Endothelial cell of umbilical vein (primary cell): ENCODE measurements at regions of chr11 and their contacts with region 1.

Region 1: GRCh38 chr11:118198370-118198769 is 21.9 kb upstream of the SCN2B start:
- DNase-seq: peak; percentile 61
- H3K4me3 ChIP-seq: no peak overlapping the region
- H3K27ac ChIP-seq: no peak overlapping the region
- H3K4me1 ChIP-seq: no peaks in the 10 kb centered on the region
- H3K27me3 ChIP-seq: peaks cover 0 to 4% of the 10 kb centered on the region in 2 experiments
- CTCF ChIP-seq: peak; percentile 81 to 93
- POLR2A ChIP-seq: no peak

Region 2: GRCh38 chr11:118180300-118180703 is 18.1 kb before region 1 on chr11:
- CTCF ChIA-PET with region 1: interaction called, 15 read pairs
- POLR2A ChIA-PET with region 1: no interaction called
- dilution Hi-C with region 1: no loop called
- intact Hi-C with region 1: no loop called
- DNase-seq: no peak
- H3K4me3 ChIP-seq: no peak overlapping the region
- H3K27ac ChIP-seq: no peak overlapping the region
- H3K4me1 ChIP-seq: no peaks in the 10 kb centered on the region
- H3K27me3 ChIP-seq: peaks cover 16 to 18% of the 10 kb centered on the region in 2 experiments
- CTCF ChIP-seq: no peak
- POLR2A ChIP-seq: no peak

Region 3: DNA sequence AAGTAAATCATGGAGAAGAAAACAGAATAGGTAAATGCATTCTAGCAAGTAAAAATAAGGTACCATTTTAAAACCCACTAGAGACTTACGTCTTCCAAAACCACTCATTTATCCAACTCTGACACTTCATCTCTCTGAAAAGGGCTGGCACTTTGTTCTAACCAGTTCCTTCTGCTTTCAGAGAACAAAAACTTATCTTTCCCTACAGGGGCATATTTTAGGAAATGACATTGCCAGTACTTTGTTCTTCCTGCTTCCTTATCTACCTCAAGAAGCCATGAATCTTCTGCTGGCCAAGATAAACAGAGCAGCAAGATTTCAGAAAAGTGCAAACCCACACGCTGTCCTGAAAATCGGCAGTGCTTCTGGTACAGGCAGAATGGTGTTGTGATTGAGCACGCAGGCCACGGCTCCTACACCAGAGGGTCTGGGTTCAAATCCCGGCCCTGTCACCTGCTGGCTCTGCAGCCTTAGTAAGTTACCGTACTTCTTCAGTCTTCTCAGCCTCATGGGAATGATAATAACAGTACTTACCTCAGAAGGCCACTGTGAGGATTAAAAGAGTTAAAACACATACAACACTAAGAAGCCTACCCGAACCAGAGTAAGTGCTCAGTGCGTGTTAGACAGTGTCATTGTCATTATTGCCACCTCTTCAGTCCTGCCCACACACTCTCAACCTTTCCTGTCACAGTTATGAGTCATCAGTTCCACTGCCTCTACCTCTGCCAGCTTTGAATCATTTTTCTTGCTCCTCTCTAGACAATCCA is 42.8 kb after region 1 on chr11:
- CTCF ChIA-PET with region 1: interaction called, 23 read pairs
- POLR2A ChIA-PET with region 1: no interaction called
- dilution Hi-C with region 1: no loop called
- intact Hi-C with region 1: no loop called
- DNase-seq: peak; percentile 93
- H3K4me3 ChIP-seq: peak overlapping the region in 1 of 3 experiments; percentile 4
- H3K27ac ChIP-seq: peak overlapping the region; percentile 64
- H3K4me1 ChIP-seq: peaks cover 45% of the 10 kb centered on the region
- H3K27me3 ChIP-seq: no peaks in the 10 kb centered on the region
- CTCF ChIP-seq: no peak
- POLR2A ChIP-seq: peak; percentile 78

Region 4: GRCh38 chr11:118263695-118264567 is 65.6 kb after region 1 on chr11 and contains the start of gene MPZL2:
- CTCF ChIA-PET with region 1: interaction called, 104 read pairs
- POLR2A ChIA-PET with region 1: interaction called, 4 read pairs
- dilution Hi-C with region 1: no loop called
- intact Hi-C with region 1: no loop called
- DNase-seq: peak; percentile 57
- H3K4me3 ChIP-seq: peak within 1 kb of the TSS; percentile 13 to 69 (median 44)
- H3K27ac ChIP-seq: peak within 1 kb of the TSS; percentile 4
- H3K4me1 ChIP-seq: peaks cover 51% of the 10 kb centered on the region
- H3K27me3 ChIP-seq: no peaks in the 10 kb centered on the region
- CTCF ChIP-seq: no peak
- POLR2A ChIP-seq: peak; percentile 68
- total RNA-seq, gene MPZL2: 37.1 and 49.5 TPM in 2 replicates

Region 5: DNA sequence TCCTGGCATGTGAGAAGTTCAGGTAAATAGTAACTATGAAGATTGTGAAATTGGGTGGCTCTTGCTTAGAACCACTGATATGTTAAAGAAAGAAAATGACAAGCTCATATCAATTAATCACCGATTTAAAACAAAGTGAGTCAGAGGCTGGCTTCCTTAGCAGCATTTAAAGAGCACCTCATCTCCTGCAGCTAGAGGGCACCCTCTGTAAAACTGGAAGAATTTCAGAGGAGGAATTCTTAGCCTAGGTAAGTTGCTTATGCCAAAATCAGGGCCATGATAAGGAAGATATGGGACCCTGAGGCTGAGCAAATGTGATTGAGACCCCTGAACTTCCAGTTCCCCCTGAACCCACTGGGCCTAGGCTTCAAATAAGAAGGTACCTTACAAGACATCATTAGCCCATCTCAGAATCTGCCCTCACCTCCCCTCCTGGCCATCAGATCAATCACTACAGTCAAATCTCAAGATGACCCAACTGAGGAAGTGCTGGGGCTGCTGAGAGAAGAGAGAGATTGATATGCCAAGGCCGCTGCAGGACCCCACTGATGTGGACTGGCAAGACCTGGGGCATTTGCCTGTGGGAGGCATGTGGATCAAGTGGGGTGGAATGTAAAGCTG is 97.6 kb after region 1 on chr11:
- CTCF ChIA-PET with region 1: interaction called, 235 read pairs
- POLR2A ChIA-PET with region 1: no interaction called
- dilution Hi-C with region 1: no loop called
- intact Hi-C with region 1: loop called (anchors 1 kb)
- DNase-seq: peak; percentile 59
- H3K4me3 ChIP-seq: no peak overlapping the region
- H3K27ac ChIP-seq: no peak overlapping the region
- H3K4me1 ChIP-seq: no peaks in the 10 kb centered on the region
- H3K27me3 ChIP-seq: peaks cover 1 to 5% of the 10 kb centered on the region in 2 experiments
- CTCF ChIP-seq: peak; percentile 52 to 63
- POLR2A ChIP-seq: no peak

Region 6: GRCh38 chr11:118353084-118353710 is 154.8 kb after region 1 on chr11:
- CTCF ChIA-PET with region 1: interaction called, 83 read pairs
- POLR2A ChIA-PET with region 1: no interaction called
- dilution Hi-C with region 1: no loop called
- intact Hi-C with region 1: loop called (anchors 1 kb)
- DNase-seq: peak; percentile 25
- H3K4me3 ChIP-seq: no peak overlapping the region
- H3K27ac ChIP-seq: no peak overlapping the region
- H3K4me1 ChIP-seq: no peaks in the 10 kb centered on the region
- H3K27me3 ChIP-seq: peaks cover 6 to 13% of the 10 kb centered on the region in 2 experiments
- CTCF ChIP-seq: peak; percentile 33 to 38
- POLR2A ChIP-seq: no peak